ENCODE measurements at regions of chr4 and their contacts with region 1.

Region 1: GRCh38 chr4:15805583-15806517 is 27.7 kb downstream of the CD38 start:
- DNase-seq: peak; percentile 79
- ATAC-seq: peak; percentile 85
- H3K4me3 ChIP-seq: peak overlapping the region; percentile 53; the same call in 1 of the 2 replicates
- H3K27ac ChIP-seq: no peak overlapping the region
- H3K4me1 ChIP-seq: 0 out of 2 replicates have a peak, but pooled peaks cover 4% of the 10 kb centered on the region
- H3K27me3 ChIP-seq: no peaks in the 10 kb centered on the region
- CTCF ChIP-seq: peak; percentile 76

Region 2: GRCh38 chr4:15479089-15479912 is 326.5 kb before region 1 on chr4:
- CTCF ChIA-PET with region 1: interaction called, 6 read pairs
- POLR2A ChIA-PET with region 1: no interaction called
- intact Hi-C with region 1: loop called (anchors 1 kb)
- DNase-seq: peak; percentile 81
- ATAC-seq: peak; percentile 83
- H3K4me3 ChIP-seq: peak overlapping the region; percentile 75
- H3K27ac ChIP-seq: peak overlapping the region; percentile 76
- H3K4me1 ChIP-seq: peaks cover 8% of the 10 kb centered on the region; the same call in 1 of the 2 replicates
- H3K27me3 ChIP-seq: no peaks in the 10 kb centered on the region
- CTCF ChIP-seq: peak; percentile 75

Region 3: DNA sequence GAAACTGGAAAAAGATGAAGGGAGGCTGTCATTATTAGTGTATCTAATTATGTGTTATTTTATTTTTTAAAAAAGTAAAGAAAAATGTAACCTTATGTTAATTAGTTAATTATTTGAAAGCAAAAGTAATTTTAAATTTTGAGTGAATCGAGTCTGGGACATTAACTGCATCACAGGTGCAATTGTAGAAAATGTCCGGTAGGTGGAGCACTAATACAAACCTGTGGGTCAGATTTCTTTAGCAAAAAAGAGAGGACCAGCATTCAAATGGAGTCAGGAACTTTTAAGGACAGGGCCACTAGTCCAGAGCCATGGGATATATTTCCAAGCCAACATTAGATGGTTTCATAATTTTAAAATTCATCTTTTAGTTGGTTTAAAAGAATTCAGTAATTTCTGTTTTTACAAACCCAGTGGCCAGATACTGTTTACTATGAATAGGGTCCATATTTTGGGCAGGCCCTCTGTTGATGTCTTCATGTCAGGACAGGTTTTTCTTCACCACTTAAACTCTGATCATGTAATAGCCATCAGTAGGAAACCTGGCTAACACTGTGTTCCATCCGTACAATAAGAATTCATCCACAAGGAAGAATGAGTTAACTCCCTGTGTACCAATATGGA is 75.8 kb before region 1 on chr4:
- CTCF ChIA-PET with region 1: no interaction called
- POLR2A ChIA-PET with region 1: no interaction called
- intact Hi-C with region 1: loop called (anchors 5 kb)
- DNase-seq: peak; percentile 63
- ATAC-seq: peak; percentile 62
- H3K4me3 ChIP-seq: no peak overlapping the region
- H3K27ac ChIP-seq: no peak overlapping the region
- H3K4me1 ChIP-seq: no peaks in the 10 kb centered on the region
- H3K27me3 ChIP-seq: no peaks in the 10 kb centered on the region
- CTCF ChIP-seq: peak; percentile 68

Region 4: DNA sequence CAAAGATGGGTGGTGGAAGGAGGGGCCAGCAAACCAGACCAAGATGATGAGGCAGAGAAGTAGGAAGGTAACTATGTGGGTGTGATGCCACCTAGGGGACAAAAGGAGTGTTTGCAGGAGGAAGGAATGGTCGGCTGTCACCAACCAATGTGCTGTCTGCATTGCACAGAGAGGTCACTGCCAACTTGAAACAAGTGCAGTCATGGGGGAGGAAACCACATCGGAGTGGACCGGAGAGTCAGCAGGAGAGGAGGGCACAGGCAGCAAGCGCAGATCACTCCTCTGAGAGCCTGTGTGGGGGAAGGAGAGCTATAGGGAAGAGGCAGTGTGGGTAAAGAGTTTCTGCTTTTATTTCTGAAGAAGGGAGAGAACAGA is 195.6 kb after region 1 on chr4:
- CTCF ChIA-PET with region 1: interaction called, 6 read pairs
- POLR2A ChIA-PET with region 1: no interaction called
- intact Hi-C with region 1: loop called (anchors 1 kb)
- DNase-seq: peak; percentile 75
- ATAC-seq: peak; percentile 95
- H3K4me3 ChIP-seq: no peak overlapping the region
- H3K27ac ChIP-seq: no peak overlapping the region
- H3K4me1 ChIP-seq: no peaks in the 10 kb centered on the region
- H3K27me3 ChIP-seq: no peaks in the 10 kb centered on the region
- CTCF ChIP-seq: peak; percentile 83

Region 5: GRCh38 chr4:16196478-16197393 is 390.9 kb after region 1 on chr4:
- CTCF ChIA-PET with region 1: interaction called, 3 read pairs
- POLR2A ChIA-PET with region 1: no interaction called
- intact Hi-C with region 1: loop called (anchors 10 kb)
- DNase-seq: peak; percentile 86
- ATAC-seq: peak; percentile 97
- H3K4me3 ChIP-seq: peak overlapping the region; percentile 62
- H3K27ac ChIP-seq: peak overlapping the region; percentile 39; the same call in 1 of the 2 replicates
- H3K4me1 ChIP-seq: peaks cover 8% of the 10 kb centered on the region
- H3K27me3 ChIP-seq: no peaks in the 10 kb centered on the region
- CTCF ChIP-seq: peak; percentile 68

Measured in PC-3 (cell line).